PC-9 (cell line): ENCODE measurements at regions of chr1 and their contacts with region 1.

Region 1: DNA sequence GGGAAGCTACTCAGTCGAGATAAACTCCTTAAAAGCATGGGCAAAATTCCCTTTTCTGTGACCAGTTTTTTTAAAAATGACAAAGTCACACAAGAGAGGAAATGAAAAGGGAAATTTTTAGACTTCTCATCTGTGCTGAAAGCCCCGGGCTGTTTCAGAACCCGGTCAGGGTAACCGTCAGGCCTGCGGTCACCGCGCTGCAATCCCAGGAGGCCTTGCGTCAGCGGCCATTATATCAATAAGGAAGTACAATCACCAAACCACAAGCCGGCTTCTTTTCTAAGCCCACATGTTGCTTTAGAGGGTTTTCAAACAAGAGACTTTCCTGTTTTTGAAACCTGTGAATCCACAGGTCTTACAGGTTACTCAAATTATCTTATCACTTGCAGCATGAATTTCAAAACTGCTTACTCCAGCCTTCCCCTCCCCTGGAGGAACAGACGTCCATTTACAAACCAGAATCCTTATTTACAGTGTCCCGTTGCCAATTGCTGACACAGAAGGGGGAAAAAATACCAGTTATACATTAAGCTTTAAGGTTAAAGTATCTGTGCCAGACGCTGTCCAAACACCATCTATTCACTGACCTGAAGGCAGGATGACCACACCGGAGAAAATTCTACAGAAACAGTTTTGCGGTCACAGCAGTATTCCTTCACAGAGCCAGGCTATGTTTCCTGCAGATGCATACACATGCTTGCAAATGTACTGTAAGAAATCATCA is 165.3 kb downstream of the TOMM20 start:
- DNase-seq: peak; percentile 90 to 99
- H3K4me3 ChIP-seq: peak overlapping the region; percentile 38
- H3K27ac ChIP-seq: peak overlapping the region; percentile 99
- H3K4me1 ChIP-seq: peaks cover 84% of the 10 kb centered on the region
- H3K27me3 ChIP-seq: no peaks in the 10 kb centered on the region
- CTCF ChIP-seq: no peak

Region 2: DNA sequence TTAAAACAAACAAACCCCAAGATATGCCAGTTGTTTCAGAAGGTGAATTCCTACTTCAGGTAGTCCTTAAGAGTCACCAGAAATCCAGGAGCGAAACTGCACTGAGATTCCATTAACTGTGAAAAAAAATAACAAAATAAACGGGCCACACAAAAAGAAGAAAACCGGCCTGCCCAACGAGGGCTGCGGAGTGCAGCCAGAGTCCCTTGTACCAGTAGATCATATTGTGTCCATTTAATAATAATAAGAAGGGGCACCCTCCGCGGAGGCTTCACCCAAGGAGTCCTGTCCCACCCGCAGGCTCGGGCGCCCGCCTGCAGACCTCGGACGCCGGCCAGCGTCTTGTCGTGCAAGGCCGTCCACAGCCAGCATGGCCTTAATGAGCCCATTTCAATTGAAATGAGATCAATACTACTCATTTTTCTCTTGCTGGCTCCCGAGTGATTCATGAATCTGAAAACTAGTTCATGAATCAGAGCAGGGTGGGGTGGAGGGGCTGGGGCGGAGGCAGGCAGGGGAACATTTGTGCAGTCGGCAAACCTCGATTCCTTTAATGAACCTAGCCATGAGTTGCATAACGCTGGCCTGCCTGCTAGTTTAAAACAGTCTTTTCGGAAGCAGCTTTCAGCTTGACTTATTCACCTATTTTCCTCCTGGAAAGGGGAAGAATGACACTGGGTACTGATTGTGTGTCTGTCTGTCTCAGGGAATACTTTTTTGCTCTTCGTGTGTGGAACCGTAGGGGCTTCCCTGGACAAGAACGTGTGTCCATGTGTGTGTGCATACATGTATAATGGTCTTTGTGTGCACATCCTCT is 240.2 kb before region 1 on chr1:
- CTCF ChIA-PET with region 1: no interaction called
- POLR2A ChIA-PET with region 1: interaction called, 10 read pairs
- intact Hi-C with region 1: loop called (anchors 1 kb)
- DNase-seq: peak in 1 of 2 experiments; percentile 90
- H3K4me3 ChIP-seq: peak overlapping the region; percentile 53
- H3K27ac ChIP-seq: peak overlapping the region; percentile 97
- H3K4me1 ChIP-seq: peaks cover 71% of the 10 kb centered on the region
- H3K27me3 ChIP-seq: no peaks in the 10 kb centered on the region
- CTCF ChIP-seq: no peak

Region 3: GRCh38 chr1:234842726-234843641 is 120.4 kb before region 1 on chr1:
- CTCF ChIA-PET with region 1: no interaction called
- POLR2A ChIA-PET with region 1: no interaction called
- intact Hi-C with region 1: no loop called
- DNase-seq: peak in 1 of 2 experiments; percentile 25
- H3K4me3 ChIP-seq: no peak overlapping the region
- H3K27ac ChIP-seq: no peak overlapping the region
- H3K4me1 ChIP-seq: peaks cover 32% of the 10 kb centered on the region; the same call in 1 of the 2 replicates
- H3K27me3 ChIP-seq: no peaks in the 10 kb centered on the region
- CTCF ChIP-seq: no peak

Region 4: DNA sequence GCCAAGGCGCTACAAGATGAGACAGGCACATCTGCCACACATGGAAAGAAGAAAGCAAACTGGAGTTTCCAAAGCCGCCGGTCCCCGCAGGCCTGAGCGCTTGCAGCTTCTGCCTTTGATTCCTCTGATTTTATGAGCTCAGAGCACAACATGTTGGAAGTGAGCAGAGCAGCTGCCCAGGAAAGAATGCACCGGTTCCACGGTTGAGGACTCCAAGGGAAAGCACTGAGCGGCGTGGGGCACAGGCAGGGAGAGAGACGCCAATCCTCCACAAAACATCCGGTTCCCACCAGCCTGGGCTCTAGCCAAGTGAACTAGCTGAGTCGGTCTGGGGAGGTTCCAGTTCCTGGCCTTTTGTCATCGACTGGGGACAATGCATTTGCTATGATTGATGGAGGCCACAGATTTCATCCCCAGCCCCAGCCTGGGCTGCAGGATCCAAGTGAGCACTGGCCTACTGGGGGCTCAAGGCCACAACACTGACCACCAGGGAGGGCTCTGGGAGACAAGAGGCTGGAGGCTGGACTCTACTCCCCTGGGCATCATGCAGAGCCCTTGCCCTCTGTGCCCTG is 100.3 kb before region 1 on chr1:
- CTCF ChIA-PET with region 1: no interaction called
- POLR2A ChIA-PET with region 1: no interaction called
- intact Hi-C with region 1: loop called (anchors 2 kb)
- DNase-seq: no peak
- H3K4me3 ChIP-seq: no peak overlapping the region
- H3K27ac ChIP-seq: no peak overlapping the region
- H3K4me1 ChIP-seq: peaks cover 56% of the 10 kb centered on the region
- H3K27me3 ChIP-seq: no peaks in the 10 kb centered on the region
- CTCF ChIP-seq: no peak

Region 5: GRCh38 chr1:234912548-234913277 is 50.6 kb before region 1 on chr1:
- CTCF ChIA-PET with region 1: no interaction called
- POLR2A ChIA-PET with region 1: no interaction called
- intact Hi-C with region 1: loop called (anchors 1 kb)
- DNase-seq: peak in 1 of 2 experiments; percentile 89
- H3K4me3 ChIP-seq: no peak overlapping the region
- H3K27ac ChIP-seq: no peak overlapping the region
- H3K4me1 ChIP-seq: no peaks in the 10 kb centered on the region
- H3K27me3 ChIP-seq: no peaks in the 10 kb centered on the region
- CTCF ChIP-seq: no peak

Region 6: GRCh38 chr1:234997201-234997895 is 34.0 kb after region 1 on chr1:
- CTCF ChIA-PET with region 1: no interaction called
- POLR2A ChIA-PET with region 1: interaction called, 4 read pairs
- intact Hi-C with region 1: loop called (anchors 1 kb)
- DNase-seq: peak; percentile 99 to 100
- H3K4me3 ChIP-seq: peak overlapping the region; percentile 45
- H3K27ac ChIP-seq: peak overlapping the region; percentile 100
- H3K4me1 ChIP-seq: peaks cover 34% of the 10 kb centered on the region
- H3K27me3 ChIP-seq: no peaks in the 10 kb centered on the region
- CTCF ChIP-seq: no peak

Region 7: DNA sequence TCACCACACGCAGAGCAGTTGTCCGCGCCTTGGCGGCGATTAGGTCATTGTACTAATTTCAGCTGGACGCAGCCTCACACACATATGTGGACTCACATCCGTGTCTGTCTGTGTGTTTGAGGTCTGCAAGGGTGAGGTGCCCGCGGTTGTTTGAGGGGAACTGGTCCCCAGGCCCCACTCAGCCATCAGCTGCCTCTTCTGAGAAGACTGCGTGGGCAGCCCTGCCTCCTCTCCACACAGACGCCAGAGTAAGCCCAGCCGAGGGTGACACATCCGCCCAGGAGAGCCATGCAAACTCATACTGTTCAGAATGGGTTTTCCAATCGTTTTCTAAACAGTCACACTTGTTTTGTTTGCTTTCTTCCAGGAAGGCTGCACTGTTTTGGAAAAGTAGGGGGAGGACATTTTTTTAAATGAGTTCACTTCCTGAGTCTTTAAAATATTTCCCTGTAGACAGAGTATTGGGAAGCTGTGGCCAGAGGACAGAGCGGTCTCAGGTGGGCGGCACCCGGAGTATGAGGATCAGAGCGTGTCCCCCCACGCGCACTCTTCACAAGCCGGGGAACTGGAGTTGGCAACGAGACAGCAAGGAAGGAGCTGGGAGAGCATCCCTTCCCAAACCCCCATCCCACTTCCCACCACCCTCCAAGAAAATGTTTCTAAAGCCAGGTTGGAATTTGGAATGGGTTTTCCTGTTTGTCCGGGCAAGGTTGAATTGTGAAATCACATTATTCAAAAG is 112.0 kb after region 1 on chr1:
- CTCF ChIA-PET with region 1: no interaction called
- POLR2A ChIA-PET with region 1: interaction called, 3 read pairs
- intact Hi-C with region 1: loop called (anchors 1 kb)
- DNase-seq: peak; percentile 66 to 95
- H3K4me3 ChIP-seq: peak overlapping the region; percentile 61
- H3K27ac ChIP-seq: peak overlapping the region; percentile 100
- H3K4me1 ChIP-seq: peaks cover 94% of the 10 kb centered on the region
- H3K27me3 ChIP-seq: no peaks in the 10 kb centered on the region
- CTCF ChIP-seq: no peak